ENCODE measurements at regions of chr7 and their contacts with region 1.

Region 1: DNA sequence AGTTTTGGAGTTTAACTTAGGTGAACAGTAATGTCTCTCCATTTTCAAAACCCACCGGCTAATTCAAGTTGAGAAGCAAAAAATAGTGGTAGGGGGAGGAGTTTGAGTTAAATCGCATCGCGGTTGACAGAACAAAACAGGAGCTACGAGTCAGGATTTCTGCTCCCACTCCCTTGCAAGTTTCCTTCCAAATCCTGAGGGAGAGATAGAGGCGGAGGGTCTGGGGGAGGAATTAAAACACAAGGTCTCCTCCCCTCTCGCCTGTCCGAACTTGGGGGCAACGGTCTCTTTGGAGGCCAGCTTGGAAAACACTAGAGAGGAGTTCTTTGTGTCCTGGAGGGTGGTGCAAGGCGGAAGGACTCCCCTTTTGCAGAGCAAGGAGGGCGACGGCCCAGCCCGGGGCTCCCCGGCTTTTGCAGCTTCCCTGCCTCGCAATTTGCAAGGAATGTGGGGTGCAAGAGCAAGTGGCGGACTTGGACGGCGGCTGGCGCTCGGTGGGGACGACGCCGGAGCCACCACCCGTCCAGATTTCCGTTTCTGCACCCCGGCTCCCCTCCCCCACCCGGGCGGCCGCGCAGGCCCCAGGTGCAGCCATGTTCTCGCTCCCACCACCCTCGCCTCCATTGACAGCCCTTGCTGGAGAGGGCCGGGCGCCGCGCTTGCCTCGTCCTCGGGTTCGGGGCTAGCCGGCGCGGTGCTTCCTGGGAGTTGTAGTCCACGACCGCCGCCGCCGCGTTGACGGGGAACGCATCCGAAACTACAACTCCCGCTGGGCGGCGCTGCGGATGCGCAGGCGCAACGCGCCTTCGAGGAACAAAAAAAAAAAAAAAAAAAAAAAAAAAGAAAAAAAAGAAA is 454 bp upstream of the GTF2I start:
- DNase-seq: peak; percentile 98
- H3K4me3 Mint-ChIP-seq: peak overlapping the region; percentile 85
- H3K27ac Mint-ChIP-seq: peak overlapping the region; percentile 82
- H3K4me1 Mint-ChIP-seq: peaks cover 49% of the 10 kb centered on the region
- H3K27me3 Mint-ChIP-seq: peaks cover 1% of the 10 kb centered on the region

Region 2: GRCh38 chr7:74606101-74606908 is 50.8 kb before region 1 on chr7:
- CTCF ChIA-PET with region 1: no interaction called
- intact Hi-C with region 1: loop called (anchors 2 kb)
- DNase-seq: peak; percentile 55
- H3K4me3 Mint-ChIP-seq: peak overlapping the region; percentile 59
- H3K27ac Mint-ChIP-seq: no peak overlapping the region
- H3K4me1 Mint-ChIP-seq: peaks cover 5% of the 10 kb centered on the region
- H3K27me3 Mint-ChIP-seq: no peaks in the 10 kb centered on the region

Region 3: DNA sequence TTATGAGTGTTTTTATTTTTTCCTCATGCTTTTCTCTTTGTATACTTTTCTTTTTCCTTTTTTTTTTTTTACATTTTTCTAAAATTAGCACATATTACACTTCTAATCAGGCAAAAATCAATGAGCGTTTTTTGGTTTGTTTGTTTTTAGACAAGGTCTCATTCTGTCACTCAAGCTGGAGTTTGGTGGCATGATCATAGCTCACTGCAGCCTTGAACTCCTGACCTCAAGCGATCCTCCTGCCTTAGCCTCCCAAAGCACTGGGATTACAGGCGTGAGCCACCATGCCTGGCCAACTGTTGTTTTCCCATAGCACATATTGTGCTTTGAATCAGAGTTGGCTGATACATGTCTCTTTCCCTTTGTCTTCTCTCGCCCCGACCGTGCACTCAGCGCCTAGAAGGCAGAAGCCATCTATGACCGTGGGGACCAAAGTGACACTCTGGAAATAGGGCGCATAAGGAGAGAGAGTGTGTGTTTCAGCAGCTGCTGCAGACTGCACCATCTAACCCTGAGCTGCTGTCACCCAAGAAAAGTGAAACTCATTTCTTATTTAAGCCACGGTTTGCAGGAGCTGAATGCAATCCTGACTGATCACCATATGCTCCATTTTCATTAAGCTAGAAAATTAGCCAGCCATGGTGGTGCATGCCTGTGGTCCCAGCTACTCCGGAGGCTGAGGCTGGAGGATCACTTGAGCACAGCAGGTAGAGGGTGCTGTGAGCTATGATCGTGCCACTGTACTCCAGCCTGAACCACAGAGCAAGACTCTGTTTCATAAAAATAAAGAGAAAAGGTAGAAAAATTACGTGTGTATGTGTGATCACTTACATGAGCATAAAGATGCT is 40.9 kb before region 1 on chr7:
- CTCF ChIA-PET with region 1: no interaction called
- intact Hi-C with region 1: loop called (anchors 1 kb)
- DNase-seq: peak; percentile 45
- H3K4me3 Mint-ChIP-seq: no peak overlapping the region
- H3K27ac Mint-ChIP-seq: no peak overlapping the region
- H3K4me1 Mint-ChIP-seq: peaks cover 22% of the 10 kb centered on the region
- H3K27me3 Mint-ChIP-seq: no peaks in the 10 kb centered on the region

Region 4: GRCh38 chr7:74625446-74625845 is 31.6 kb before region 1 on chr7:
- CTCF ChIA-PET with region 1: interaction called, 4 read pairs
- intact Hi-C with region 1: loop called (anchors 2 kb)
- DNase-seq: no peak
- H3K4me3 Mint-ChIP-seq: no peak overlapping the region
- H3K27ac Mint-ChIP-seq: no peak overlapping the region
- H3K4me1 Mint-ChIP-seq: peaks cover 2% of the 10 kb centered on the region
- H3K27me3 Mint-ChIP-seq: no peaks in the 10 kb centered on the region

Region 5: GRCh38 chr7:74672343-74672915 is 15.4 kb after region 1 on chr7:
- CTCF ChIA-PET with region 1: interaction called, 3 read pairs
- intact Hi-C with region 1: loop called (anchors 2 kb)
- DNase-seq: no peak
- H3K4me3 Mint-ChIP-seq: no peak overlapping the region
- H3K27ac Mint-ChIP-seq: no peak overlapping the region
- H3K4me1 Mint-ChIP-seq: peaks cover 32% of the 10 kb centered on the region
- H3K27me3 Mint-ChIP-seq: no peaks in the 10 kb centered on the region